Panc1 (cell line): ENCODE measurements at regions of chr5 and their contacts with region 1.

Region 1: GRCh38 chr5:14142827-14143548 is at the start of gene TRIO:
- DNase-seq: no peak
- ATAC-seq: peak; percentile 68
- H3K4me3 ChIP-seq: peak within 1 kb of the TSS; percentile 74 to 89
- H3K27ac ChIP-seq: peak within 1 kb of the TSS; percentile 100
- H3K4me1 ChIP-seq: peaks cover 39% of the 10 kb centered on the region
- H3K27me3 ChIP-seq: no peaks in the 10 kb centered on the region
- CTCF ChIP-seq: peak; percentile 67
- total RNA-seq, gene TRIO: 349 TPM

Region 2: GRCh38 chr5:13878357-13878756 is 264.6 kb before region 1 on chr5:
- CTCF ChIA-PET with region 1: no interaction called
- POLR2A ChIA-PET with region 1: no interaction called
- in situ Hi-C with region 1: no loop called
- intact Hi-C with region 1: no loop called
- DNase-seq: no peak
- ATAC-seq: no peak
- H3K4me3 ChIP-seq: no peak overlapping the region
- H3K27ac ChIP-seq: no peak overlapping the region
- H3K4me1 ChIP-seq: no peaks in the 10 kb centered on the region
- H3K27me3 ChIP-seq: no peaks in the 10 kb centered on the region
- CTCF ChIP-seq: no peak

Region 3: DNA sequence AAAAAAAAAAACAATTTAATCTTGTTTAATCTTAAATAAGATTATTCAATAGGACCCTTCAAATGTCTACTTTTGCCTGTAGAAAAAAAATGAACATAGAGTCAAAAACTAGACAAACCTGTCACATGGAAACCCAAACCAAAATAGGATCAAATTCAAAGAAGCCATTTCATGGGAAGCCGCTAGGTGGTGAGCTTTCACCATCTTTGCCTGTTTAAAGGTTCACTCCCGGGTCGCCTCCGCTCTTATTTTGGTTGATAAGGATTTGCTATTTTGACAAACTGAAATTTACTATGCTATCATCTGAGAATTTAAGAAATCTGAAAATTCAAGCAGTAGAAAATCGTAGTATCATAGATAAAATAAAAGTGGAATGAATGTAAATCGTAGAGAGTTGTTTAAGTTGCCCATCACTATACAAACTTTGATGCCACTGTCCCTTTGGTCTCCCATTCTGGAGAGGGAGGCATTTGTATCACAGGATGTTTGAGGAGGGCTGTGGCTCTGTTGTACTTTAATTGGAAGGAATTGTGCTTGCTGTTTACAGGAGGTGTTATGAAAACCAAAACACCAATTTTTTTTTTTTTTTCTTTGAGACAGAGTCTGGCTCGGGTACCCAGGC is 155.0 kb before region 1 on chr5:
- CTCF ChIA-PET with region 1: interaction called, 7 read pairs
- POLR2A ChIA-PET with region 1: interaction called, 9 read pairs
- in situ Hi-C with region 1: no loop called
- intact Hi-C with region 1: loop called (anchors 5 kb)
- DNase-seq: peak; percentile 79
- ATAC-seq: peak; percentile 60
- H3K4me3 ChIP-seq: no peak overlapping the region
- H3K27ac ChIP-seq: peak overlapping the region; percentile 98
- H3K4me1 ChIP-seq: peaks cover 72% of the 10 kb centered on the region
- H3K27me3 ChIP-seq: no peaks in the 10 kb centered on the region
- CTCF ChIP-seq: peak; percentile 86

Region 4: DNA sequence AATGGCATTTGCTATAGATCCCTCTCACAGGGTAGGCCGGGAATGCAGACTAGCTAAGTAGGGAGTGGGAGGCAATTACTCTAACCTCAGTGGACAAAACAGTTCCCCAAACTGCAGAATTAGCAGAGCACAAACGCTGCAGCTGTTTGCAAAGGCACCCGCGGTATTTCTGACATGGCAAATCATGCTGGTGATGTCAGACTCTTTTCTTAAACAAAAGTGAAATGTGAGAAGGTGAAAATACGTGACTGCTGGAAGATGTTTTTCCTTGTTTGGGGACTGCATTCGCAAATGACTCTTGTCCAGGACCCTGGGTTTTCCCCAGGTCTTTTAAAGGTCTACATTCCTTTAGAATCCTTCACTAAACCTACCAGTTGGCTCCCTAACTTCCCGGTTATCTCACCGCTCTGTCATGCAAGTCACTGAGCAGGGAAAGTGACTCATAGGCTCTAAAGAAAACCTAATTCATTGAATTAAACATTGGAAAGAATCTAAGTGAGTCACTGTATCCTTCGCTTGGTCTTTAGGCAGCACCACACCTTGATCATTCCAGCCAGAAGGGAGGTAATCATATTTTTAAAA is 107.0 kb before region 1 on chr5:
- CTCF ChIA-PET with region 1: interaction called, 8 read pairs
- POLR2A ChIA-PET with region 1: interaction called, 4 read pairs
- in situ Hi-C with region 1: no loop called
- intact Hi-C with region 1: loop called (anchors 2 kb)
- DNase-seq: peak; percentile 99
- ATAC-seq: peak; percentile 81
- H3K4me3 ChIP-seq: peak overlapping the region; percentile 10 to 35
- H3K27ac ChIP-seq: peak overlapping the region; percentile 100
- H3K4me1 ChIP-seq: peaks cover 58% of the 10 kb centered on the region
- H3K27me3 ChIP-seq: no peaks in the 10 kb centered on the region
- CTCF ChIP-seq: no peak

Region 5: DNA sequence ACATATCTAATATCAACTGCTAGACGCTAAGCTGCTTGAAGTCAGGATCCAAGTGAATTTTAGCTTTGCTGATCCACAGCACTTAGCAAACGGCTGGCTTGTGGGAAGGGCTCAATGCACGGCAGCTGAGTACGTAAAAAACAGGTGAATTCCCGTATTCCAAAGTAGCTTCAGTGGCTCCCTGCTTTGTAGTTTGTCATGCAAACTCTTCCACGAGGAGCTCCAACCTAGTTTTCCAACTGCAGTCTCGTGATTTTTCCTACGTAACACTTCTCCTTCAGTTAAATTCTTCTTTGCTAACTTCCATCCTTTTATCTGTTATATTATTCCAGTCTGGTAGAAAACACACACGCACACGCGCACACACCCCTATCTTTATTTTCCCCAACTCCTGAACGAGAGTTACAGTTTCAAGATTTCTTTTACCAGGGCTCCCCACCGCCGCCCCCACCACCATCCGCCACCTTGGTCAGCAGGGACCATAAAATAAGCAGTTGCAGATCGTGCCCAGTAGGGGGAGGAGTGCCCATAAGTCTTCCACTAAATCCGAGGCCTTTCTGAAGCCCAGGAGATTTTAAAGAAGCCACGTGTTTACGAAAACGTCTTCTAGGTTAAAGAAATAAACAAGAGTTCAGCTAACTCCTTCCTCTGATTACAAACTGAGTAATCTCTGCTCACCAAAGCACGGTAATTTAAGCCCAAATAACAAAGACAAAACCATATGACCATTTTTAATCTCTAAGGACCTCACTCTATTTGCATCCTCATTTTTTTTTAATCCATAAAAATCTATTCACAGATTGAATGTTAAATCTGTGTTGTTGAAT is 34.6 kb before region 1 on chr5:
- CTCF ChIA-PET with region 1: interaction called, 4 read pairs
- POLR2A ChIA-PET with region 1: interaction called, 29 read pairs
- in situ Hi-C with region 1: no loop called
- intact Hi-C with region 1: loop called (anchors 2 kb)
- DNase-seq: peak; percentile 88
- ATAC-seq: peak; percentile 82
- H3K4me3 ChIP-seq: peak overlapping the region; percentile 31 to 54
- H3K27ac ChIP-seq: peak overlapping the region; percentile 100
- H3K4me1 ChIP-seq: peaks cover 51% of the 10 kb centered on the region
- H3K27me3 ChIP-seq: no peaks in the 10 kb centered on the region
- CTCF ChIP-seq: peak; percentile 92

Region 6: GRCh38 chr5:14183187-14183939 is 40.4 kb after region 1 on chr5:
- CTCF ChIA-PET with region 1: no interaction called
- POLR2A ChIA-PET with region 1: interaction called, 10 read pairs
- in situ Hi-C with region 1: no loop called
- intact Hi-C with region 1: no loop called
- DNase-seq: no peak
- ATAC-seq: no peak
- H3K4me3 ChIP-seq: peak overlapping the region; percentile 13 to 29; a peak in 3 of 4 replicates
- H3K27ac ChIP-seq: peak overlapping the region; percentile 99
- H3K4me1 ChIP-seq: peaks cover 97% of the 10 kb centered on the region
- H3K27me3 ChIP-seq: no peaks in the 10 kb centered on the region
- CTCF ChIP-seq: no peak

Region 7: DNA sequence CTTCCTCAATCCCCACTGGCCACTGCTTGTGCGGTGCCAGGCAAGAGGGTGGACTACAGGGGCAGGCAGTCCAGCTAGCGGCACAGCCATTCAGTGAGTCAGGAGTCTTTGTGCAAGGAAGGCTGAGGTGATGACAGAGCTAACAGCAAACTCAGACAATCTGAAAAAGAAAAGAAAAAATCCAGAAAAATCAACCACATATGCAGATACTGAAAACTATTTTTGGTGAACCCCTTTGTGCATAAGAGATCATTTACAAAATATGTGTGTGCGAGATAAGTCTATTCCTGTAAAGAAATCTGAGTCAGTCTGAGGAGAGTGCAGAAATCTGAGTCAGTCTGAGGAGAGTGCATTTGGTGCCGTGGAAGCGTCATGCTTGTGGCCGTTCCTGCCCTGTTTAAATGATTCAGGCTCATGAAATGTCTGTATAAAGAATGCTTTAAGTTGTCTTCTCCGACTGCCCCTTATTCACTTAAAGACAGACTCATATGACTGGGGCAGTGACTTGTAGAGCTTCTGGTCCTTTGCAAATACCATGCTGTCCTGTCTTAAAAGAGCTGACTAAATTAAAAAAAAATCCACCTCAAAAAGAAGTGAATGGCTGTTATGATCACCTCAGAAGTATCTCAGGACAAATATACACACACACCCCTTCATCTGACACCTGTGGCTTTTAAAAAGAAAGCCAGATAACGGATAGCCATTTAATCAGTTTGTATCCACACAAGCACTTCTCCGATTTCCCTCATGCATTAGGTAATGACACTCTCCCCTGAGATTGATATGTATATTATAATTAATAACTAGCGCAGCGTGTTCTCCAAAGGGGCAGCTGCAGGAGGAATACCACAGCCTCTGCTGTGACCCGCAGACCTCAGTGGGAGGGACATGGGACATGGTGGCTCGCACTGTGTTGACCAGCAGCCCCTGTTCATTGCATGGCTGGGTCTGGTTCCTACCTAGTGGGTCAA is 47.5 kb after region 1 on chr5:
- CTCF ChIA-PET with region 1: interaction called, 3 read pairs
- POLR2A ChIA-PET with region 1: interaction called, 4 read pairs
- in situ Hi-C with region 1: no loop called
- intact Hi-C with region 1: loop called (anchors 5 kb)
- DNase-seq: peak; percentile 98
- ATAC-seq: peak; percentile 81
- H3K4me3 ChIP-seq: peak overlapping the region; percentile 1 to 38; a peak in 2 of 4 replicates
- H3K27ac ChIP-seq: peak overlapping the region; percentile 99
- H3K4me1 ChIP-seq: peaks cover 99% of the 10 kb centered on the region
- H3K27me3 ChIP-seq: no peaks in the 10 kb centered on the region
- CTCF ChIP-seq: no peak

Region 8: GRCh38 chr5:14208071-14209021 is 65.4 kb after region 1 on chr5:
- CTCF ChIA-PET with region 1: no interaction called
- POLR2A ChIA-PET with region 1: no interaction called
- in situ Hi-C with region 1: no loop called
- intact Hi-C with region 1: no loop called
- DNase-seq: peak; percentile 97
- ATAC-seq: peak; percentile 53
- H3K4me3 ChIP-seq: peak overlapping the region in 1 of 2 experiments; percentile 25; a peak in 2 of 4 replicates
- H3K27ac ChIP-seq: peak overlapping the region; percentile 99
- H3K4me1 ChIP-seq: peaks cover 100% of the 10 kb centered on the region
- H3K27me3 ChIP-seq: no peaks in the 10 kb centered on the region
- CTCF ChIP-seq: no peak; the same call in 1 of the 2 replicates

Region 9: GRCh38 chr5:15249152-15249551 is 1106.2 kb after region 1 on chr5:
- CTCF ChIA-PET with region 1: no interaction called
- POLR2A ChIA-PET with region 1: no interaction called
- in situ Hi-C with region 1: no loop called
- intact Hi-C with region 1: no loop called
- DNase-seq: peak; percentile 10
- ATAC-seq: no peak
- H3K4me3 ChIP-seq: no peak overlapping the region
- H3K27ac ChIP-seq: no peak overlapping the region
- H3K4me1 ChIP-seq: no peaks in the 10 kb centered on the region
- H3K27me3 ChIP-seq: no peaks in the 10 kb centered on the region
- CTCF ChIP-seq: no peak